ENCODE measurements at regions of chr1 and their contacts with region 1.

Region 1: GRCh38 chr1:173202430-173203145 is 4.5 kb downstream of the TNFSF4 start:
- DNase-seq: peak; percentile 50
- H3K27ac ChIP-seq: no peak overlapping the region
- CTCF ChIP-seq: peak; percentile 72

Region 2: GRCh38 chr1:171501305-171502024 is 1701.1 kb before region 1 on chr1:
- CTCF ChIA-PET with region 1: no interaction called
- POLR2A ChIA-PET with region 1: no interaction called
- DNase-seq: no peak
- H3K27ac ChIP-seq: no peak overlapping the region
- CTCF ChIP-seq: no peak

Region 3: DNA sequence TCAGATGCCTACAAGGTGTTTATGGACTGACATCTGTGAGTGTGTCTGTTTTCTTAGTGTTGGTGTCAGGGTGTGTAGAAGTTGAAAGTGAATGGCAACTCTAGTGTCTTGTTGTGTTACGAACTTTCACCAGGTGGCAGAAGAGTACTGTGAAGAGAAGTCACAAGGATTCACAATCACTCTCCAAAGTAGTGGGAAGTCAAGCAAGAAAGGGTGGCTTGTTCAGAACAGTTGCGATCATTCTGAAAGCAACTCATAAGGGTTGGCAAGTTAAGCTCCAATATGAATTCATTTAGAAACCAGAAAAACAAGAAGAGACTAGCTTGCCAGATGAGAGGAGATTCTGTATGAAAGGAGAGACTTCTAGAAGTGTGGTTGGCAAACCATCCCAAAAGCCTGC is 457.6 kb before region 1 on chr1:
- CTCF ChIA-PET with region 1: interaction called, 51 read pairs
- POLR2A ChIA-PET with region 1: no interaction called
- DNase-seq: peak; percentile 39
- H3K27ac ChIP-seq: no peak overlapping the region
- CTCF ChIP-seq: peak; percentile 71

Region 4: GRCh38 chr1:172826096-172826743 is 376.4 kb before region 1 on chr1:
- CTCF ChIA-PET with region 1: interaction called, 46 read pairs
- POLR2A ChIA-PET with region 1: no interaction called
- DNase-seq: peak; percentile 57
- H3K27ac ChIP-seq: no peak overlapping the region
- CTCF ChIP-seq: peak; percentile 60

Region 5: GRCh38 chr1:173190101-173190906 is 12.3 kb before region 1 on chr1:
- CTCF ChIA-PET with region 1: interaction called, 10 read pairs
- POLR2A ChIA-PET with region 1: no interaction called
- DNase-seq: peak; percentile 72
- H3K27ac ChIP-seq: peak overlapping the region; percentile 76
- CTCF ChIP-seq: no peak